ENCODE measurements at regions of chr6 and their contacts with region 1.

Region 1: DNA sequence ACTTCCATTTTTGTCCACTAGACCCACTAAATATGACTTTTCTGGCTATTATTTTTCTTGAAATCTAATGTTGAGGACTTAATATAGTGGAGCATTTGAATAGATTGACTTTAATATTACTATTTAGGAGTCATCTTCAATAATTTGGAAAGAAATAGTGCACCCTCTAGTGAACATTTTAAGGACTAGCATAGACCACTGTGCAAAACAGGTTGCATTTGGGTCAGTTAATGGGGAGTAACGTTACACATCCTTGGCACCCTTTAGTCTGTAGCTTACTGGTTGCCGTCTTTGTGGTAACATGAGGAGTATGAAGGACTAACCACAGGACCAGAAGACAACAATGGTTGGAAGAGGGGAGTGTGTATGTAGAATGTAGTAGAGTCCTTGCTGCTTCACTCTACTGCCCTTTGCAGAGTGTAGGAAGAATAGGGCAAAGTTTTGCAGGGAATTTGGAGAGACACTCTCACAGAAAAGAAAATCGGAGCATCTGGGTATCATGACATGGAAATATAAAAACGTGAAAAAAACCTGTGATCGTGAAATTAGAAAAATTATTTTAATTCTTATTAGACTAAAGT is 25.2 kb downstream of the RFPL4B start:
- DNase-seq: peak; percentile 15
- ATAC-seq: peak; percentile 90
- H3K4me3 ChIP-seq: no peak overlapping the region
- H3K27ac ChIP-seq: no peak overlapping the region
- H3K4me1 ChIP-seq: no peaks in the 10 kb centered on the region
- H3K27me3 ChIP-seq: no peaks in the 10 kb centered on the region; the same call in 1 of the 2 replicates
- CTCF ChIP-seq: peak; percentile 80

Region 2: GRCh38 chr6:112109262-112109661 is 263.1 kb before region 1 on chr6:
- CTCF ChIA-PET with region 1: no interaction called
- POLR2A ChIA-PET with region 1: no interaction called
- in situ Hi-C with region 1: no loop called
- intact Hi-C with region 1: loop called (anchors 10 kb)
- DNase-seq: no peak
- ATAC-seq: no peak
- H3K4me3 ChIP-seq: no peak overlapping the region
- H3K27ac ChIP-seq: no peak overlapping the region
- H3K4me1 ChIP-seq: no peaks in the 10 kb centered on the region
- H3K27me3 ChIP-seq: no peaks in the 10 kb centered on the region
- CTCF ChIP-seq: no peak

Region 3: GRCh38 chr6:112180095-112180820 is 192.1 kb before region 1 on chr6:
- CTCF ChIA-PET with region 1: interaction called, 8 read pairs
- POLR2A ChIA-PET with region 1: no interaction called
- in situ Hi-C with region 1: no loop called
- intact Hi-C with region 1: loop called (anchors 5 kb)
- DNase-seq: peak; percentile 52
- ATAC-seq: peak; percentile 96
- H3K4me3 ChIP-seq: no peak overlapping the region
- H3K27ac ChIP-seq: no peak overlapping the region; the same call in 1 of the 2 replicates
- H3K4me1 ChIP-seq: no peaks in the 10 kb centered on the region
- H3K27me3 ChIP-seq: no peaks in the 10 kb centered on the region
- CTCF ChIP-seq: peak; percentile 82; the same call in 1 of the 2 replicates

Measured in Panc1 (cell line).